ENCODE measurements at regions of chr10 and their contacts with region 1.

Region 1: GRCh38 chr10:95246579-95247051 is 44.2 kb downstream of the PDLIM1 start:
- DNase-seq: peak; percentile 74 to 82
- H3K4me3 ChIP-seq: no peak overlapping the region
- H3K4me3 Mint-ChIP-seq: no peak overlapping the region
- H3K27ac Mint-ChIP-seq: peak overlapping the region; percentile 7
- H3K4me1 ChIP-seq: peaks cover 25% of the 10 kb centered on the region
- H3K4me1 Mint-ChIP-seq: peaks cover 29% of the 10 kb centered on the region
- H3K27me3 ChIP-seq: no peaks in the 10 kb centered on the region
- H3K27me3 Mint-ChIP-seq: no peaks in the 10 kb centered on the region
- CTCF ChIP-seq: peak; percentile 77 to 90

Region 2: GRCh38 chr10:94963901-94964300 is 282.7 kb before region 1 on chr10:
- CTCF ChIA-PET with region 1: interaction called, 4 read pairs
- POLR2A ChIA-PET with region 1: no interaction called
- intact Hi-C with region 1: loop called (anchors 5 kb)
- DNase-seq: peak; percentile 53 to 54
- H3K4me3 ChIP-seq: no peak overlapping the region
- H3K4me3 Mint-ChIP-seq: no peak overlapping the region
- H3K27ac Mint-ChIP-seq: no peak overlapping the region
- H3K4me1 ChIP-seq: no peaks in the 10 kb centered on the region
- H3K4me1 Mint-ChIP-seq: no peaks in the 10 kb centered on the region
- H3K27me3 ChIP-seq: no peaks in the 10 kb centered on the region
- H3K27me3 Mint-ChIP-seq: no peaks in the 10 kb centered on the region
- CTCF ChIP-seq: peak; percentile 73 to 77

Region 3: GRCh38 chr10:95260397-95260881 is 13.8 kb after region 1 on chr10:
- CTCF ChIA-PET with region 1: interaction called, 7 read pairs
- POLR2A ChIA-PET with region 1: no interaction called
- intact Hi-C with region 1: loop called (anchors 2 kb)
- DNase-seq: peak; percentile 82 to 87
- H3K4me3 ChIP-seq: no peak overlapping the region
- H3K4me3 Mint-ChIP-seq: no peak overlapping the region
- H3K27ac Mint-ChIP-seq: peak overlapping the region; percentile 75
- H3K4me1 ChIP-seq: peaks cover 54% of the 10 kb centered on the region
- H3K4me1 Mint-ChIP-seq: peaks cover 54% of the 10 kb centered on the region
- H3K27me3 ChIP-seq: no peaks in the 10 kb centered on the region
- H3K27me3 Mint-ChIP-seq: no peaks in the 10 kb centered on the region
- CTCF ChIP-seq: no peak

Region 4: DNA sequence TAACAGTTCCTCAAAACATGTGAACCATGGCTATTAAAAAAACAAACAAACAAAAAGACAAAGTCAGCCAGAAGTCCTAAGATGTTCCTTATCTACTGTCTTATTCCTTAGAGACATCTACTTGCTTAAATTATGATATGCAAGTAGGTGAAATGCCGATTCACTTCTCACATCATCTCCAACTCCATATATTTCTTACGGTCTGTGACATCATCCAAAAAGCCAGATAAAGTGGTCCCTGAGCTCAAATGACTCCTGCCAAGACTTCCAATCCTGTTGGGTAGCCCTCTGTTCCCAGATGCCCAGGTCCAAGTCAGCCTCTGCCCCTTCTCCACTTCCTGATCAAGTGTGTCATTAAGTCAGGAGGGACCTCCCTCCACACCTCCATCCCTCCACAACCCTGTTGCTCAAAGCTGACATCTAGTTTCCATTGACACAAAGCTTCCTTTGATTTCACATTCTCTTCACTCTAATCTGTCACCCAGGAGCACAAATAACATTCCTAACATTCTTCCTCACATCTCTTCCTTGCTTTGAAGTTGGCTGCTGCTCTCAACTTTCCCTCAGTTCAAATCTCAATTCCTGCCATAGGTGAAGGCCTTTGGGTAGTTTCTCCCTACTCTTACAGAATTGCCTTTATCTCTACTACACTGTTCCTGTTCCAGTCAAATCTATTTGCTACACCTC is 100.2 kb after region 1 on chr10:
- CTCF ChIA-PET with region 1: interaction called, 5 read pairs
- POLR2A ChIA-PET with region 1: interaction called, 6 read pairs
- intact Hi-C with region 1: loop called (anchors 1 kb)
- DNase-seq: peak; percentile 87 to 89
- H3K4me3 ChIP-seq: no peak overlapping the region
- H3K4me3 Mint-ChIP-seq: peak overlapping the region; percentile 57
- H3K27ac Mint-ChIP-seq: peak overlapping the region; percentile 93
- H3K4me1 ChIP-seq: peaks cover 66% of the 10 kb centered on the region
- H3K4me1 Mint-ChIP-seq: peaks cover 45% of the 10 kb centered on the region
- H3K27me3 ChIP-seq: no peaks in the 10 kb centered on the region
- H3K27me3 Mint-ChIP-seq: no peaks in the 10 kb centered on the region
- CTCF ChIP-seq: no peak

Region 5: DNA sequence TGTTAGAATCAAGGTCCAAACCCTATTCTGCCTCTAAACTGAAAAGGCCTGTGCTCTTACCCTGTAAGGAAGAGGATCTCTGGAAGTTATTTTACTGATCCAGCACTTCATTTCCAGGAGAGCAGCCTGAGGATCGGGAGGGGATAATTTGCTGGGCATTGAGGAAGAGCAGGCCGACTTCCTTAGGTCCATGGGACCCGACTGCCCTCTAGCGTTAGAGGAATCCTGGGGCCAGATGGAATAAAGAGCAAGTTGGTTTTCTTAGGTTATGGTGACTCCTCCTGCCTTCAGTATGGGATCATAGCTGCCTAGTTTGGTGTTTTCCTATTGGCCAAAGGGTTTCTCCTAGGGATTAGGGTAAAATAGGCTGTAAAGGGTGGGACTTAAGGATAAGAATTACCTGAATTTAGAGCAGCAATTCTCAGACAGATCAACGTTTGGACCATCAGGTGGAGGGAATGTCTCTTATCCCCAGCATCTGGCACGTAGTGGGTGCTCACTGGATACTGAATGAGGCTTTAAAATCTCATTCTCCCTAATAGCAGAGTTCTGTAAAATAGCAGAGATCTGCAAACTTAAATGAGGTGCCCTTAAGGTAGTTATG is 354.6 kb after region 1 on chr10:
- CTCF ChIA-PET with region 1: no interaction called
- POLR2A ChIA-PET with region 1: no interaction called
- intact Hi-C with region 1: loop called (anchors 5 kb)
- DNase-seq: peak; percentile 86 to 89
- H3K4me3 ChIP-seq: no peak overlapping the region
- H3K4me3 Mint-ChIP-seq: no peak overlapping the region
- H3K27ac Mint-ChIP-seq: no peak overlapping the region
- H3K4me1 ChIP-seq: 0 out of 2 replicates have a peak, but pooled peaks cover 3% of the 10 kb centered on the region
- H3K4me1 Mint-ChIP-seq: peaks cover 8% of the 10 kb centered on the region
- H3K27me3 ChIP-seq: no peaks in the 10 kb centered on the region
- H3K27me3 Mint-ChIP-seq: no peaks in the 10 kb centered on the region
- CTCF ChIP-seq: peak; percentile 85 to 97